ENCODE measurements at regions of chr14 and their contacts with region 1.

Region 1: GRCh38 chr14:97002454-97002853 is 205.3 kb downstream of the VRK1 start:
- DNase-seq: no peak
- ATAC-seq: no peak
- H3K4me3 ChIP-seq: no peak overlapping the region
- H3K27ac ChIP-seq: no peak overlapping the region
- H3K4me1 ChIP-seq: no peaks in the 10 kb centered on the region
- H3K27me3 ChIP-seq: no peaks in the 10 kb centered on the region
- CTCF ChIP-seq: no peak
- POLR2A ChIP-seq: no peak
- RAD21 ChIP-seq: no peak

Region 2: GRCh38 chr14:96929950-96930349 is 72.5 kb before region 1 on chr14:
- CTCF ChIA-PET with region 1: no interaction called
- POLR2A ChIA-PET with region 1: no interaction called
- dilution Hi-C with region 1: no loop called
- in situ Hi-C with region 1: no loop called
- intact Hi-C with region 1: loop called (anchors 2 kb)
- DNase-seq: no peak
- ATAC-seq: no peak
- H3K4me3 ChIP-seq: no peak overlapping the region
- H3K27ac ChIP-seq: no peak overlapping the region
- H3K4me1 ChIP-seq: no peaks in the 10 kb centered on the region
- H3K27me3 ChIP-seq: no peaks in the 10 kb centered on the region
- CTCF ChIP-seq: no peak
- POLR2A ChIP-seq: no peak
- RAD21 ChIP-seq: no peak

Measured in IMR-90 (cell line).